ENCODE measurements at regions of chr6 and their contacts with region 1.

Region 1: GRCh38 chr6:149545754-149546528 is at the start of gene PPIL4:
- DNase-seq: peak; percentile 87 to 97 (median 95)
- H3K4me3 ChIP-seq: peak within 1 kb of the TSS; percentile 70 to 100 (median 96)
- H3K27ac ChIP-seq: peak within 1 kb of the TSS; percentile 70 to 99 (median 92)
- H3K27me3 ChIP-seq: no peaks in the 10 kb centered on the region
- CTCF ChIP-seq: peak; percentile 74 to 98 (median 92)
- total RNA-seq, gene PPIL4: 20.6 to 52.2 (median 37.6) TPM

Region 2: GRCh38 chr6:149648148-149649145 is 102.5 kb after region 1 on chr6 and contains the start of gene KATNA1:
- intact Hi-C with region 1: loop called (anchors 2 to 5 kb)
- DNase-seq: peak; percentile 63 to 93 (median 78)
- H3K4me3 ChIP-seq: peak within 1 kb of the TSS; percentile 60 to 99 (median 90)
- H3K27ac ChIP-seq: peak within 1 kb of the TSS in 56 of 59 donors; percentile 4 to 90 (median 76)
- H3K27me3 ChIP-seq: no peaks in the 10 kb centered on the region
- CTCF ChIP-seq: peak in 39 of 56 donors; percentile 5 to 58 (median 35)
- total RNA-seq, gene KATNA1: 4.9 to 16.3 (median 9.9) TPM

Region 3: GRCh38 chr6:149717588-149718458 is 171.9 kb after region 1 on chr6 and contains the start of gene LATS1:
- intact Hi-C with region 1: loop called in 1 of 2 experiments (anchors 5 kb)
- DNase-seq: peak; percentile 78 to 94 (median 90)
- H3K4me3 ChIP-seq: peak within 1 kb of the TSS; percentile 56 to 100 (median 96)
- H3K27ac ChIP-seq: peak within 1 kb of the TSS; percentile 85 to 100 (median 97)
- H3K27me3 ChIP-seq: no peaks in the 10 kb centered on the region
- CTCF ChIP-seq: peak in 41 of 56 donors; percentile 3 to 60 (median 30)
- total RNA-seq, gene LATS1: 26.8 to 50.8 (median 36.9) TPM

Region 4: GRCh38 chr6:149925974-149926777 is 380.2 kb after region 1 on chr6:
- intact Hi-C with region 1: loop called in 1 of 2 experiments (anchors 10 kb)
- DNase-seq: peak; percentile 60 to 89 (median 82)
- H3K4me3 ChIP-seq: peak overlapping the region; percentile 25 to 69 (median 54)
- H3K27ac ChIP-seq: peak overlapping the region in 16 of 59 donors; percentile 6 to 73 (median 40)
- H3K27me3 ChIP-seq: peaks cover 0 to 99% (median 22%) of the 10 kb centered on the region in 45 donors
- CTCF ChIP-seq: peak; percentile 47 to 89 (median 70)

Region 5: DNA sequence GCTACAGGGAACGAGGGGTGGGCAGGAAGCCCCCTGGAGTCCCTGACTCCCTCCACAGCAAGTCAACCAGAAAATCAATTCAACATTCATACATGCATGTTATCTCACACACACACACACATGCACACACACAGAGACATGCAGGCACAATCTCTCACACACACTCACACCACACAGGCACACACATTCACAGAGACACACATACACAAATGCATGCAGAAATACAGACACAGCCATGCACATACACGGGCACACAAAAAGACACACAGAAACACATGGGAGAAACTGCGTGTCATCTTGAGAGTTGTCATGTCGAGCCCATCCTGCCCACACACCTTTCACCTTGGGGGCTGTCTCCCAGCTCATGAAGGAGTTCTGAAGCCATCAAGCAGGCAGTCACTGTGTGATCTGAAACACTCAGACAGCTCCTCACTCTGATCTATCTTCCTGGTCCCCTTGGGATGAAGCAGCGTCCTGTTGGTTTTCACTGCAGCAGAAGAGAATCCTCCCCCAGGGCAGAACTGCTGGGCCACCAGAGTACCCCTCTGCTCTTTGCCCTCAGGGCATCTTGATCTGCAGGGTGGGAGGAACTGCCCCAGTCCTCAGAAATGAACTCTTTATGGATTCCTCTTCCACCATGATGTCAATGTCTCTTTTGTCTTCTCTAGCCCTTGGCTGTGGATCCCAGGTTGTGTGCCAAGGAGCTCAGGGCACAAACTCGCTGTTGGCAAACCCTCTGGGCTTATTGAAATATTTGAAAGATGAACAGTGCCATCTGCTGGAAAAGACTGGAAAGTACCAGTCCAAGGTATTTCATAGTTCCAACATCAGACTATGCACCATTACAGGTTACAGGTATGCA is 470.6 kb after region 1 on chr6:
- intact Hi-C with region 1: loop called in 1 of 2 experiments (anchors 2 kb)
- DNase-seq: peak in 7 of 10 donors; percentile 54 to 82 (median 72)
- H3K4me3 ChIP-seq: no peak overlapping the region
- H3K27ac ChIP-seq: no peak overlapping the region
- H3K27me3 ChIP-seq: peaks cover 2 to 78% (median 57%) of the 10 kb centered on the region in 45 donors
- CTCF ChIP-seq: peak; percentile 60 to 92 (median 82)